Activated T-helper 2 cell treated with anti-CD3 and anti-CD28 coated beads, Interferon-gamma antibody, Interleukin-2, Interleukin-4, amounts not matched to agents 10 μg/mL and 5 μg/mL and 100 μg/mL, durations not matched to agents 14 hours and 24 hours and 36 hours (primary cell): ENCODE measurements at regions of chr15 and their contacts with region 1.

Region 1: GRCh38 chr15:99371180-99372103 is 120.2 kb downstream of the LRRC28 start:
- DNase-seq: no peak
- H3K4me3 Mint-ChIP-seq: peak overlapping the region; percentile 18
- H3K27ac Mint-ChIP-seq: peak overlapping the region; percentile 65
- H3K4me1 Mint-ChIP-seq: peaks cover 21% of the 10 kb centered on the region
- H3K27me3 Mint-ChIP-seq: no peaks in the 10 kb centered on the region

Region 2: GRCh38 chr15:99273801-99274200 is 97.6 kb before region 1 on chr15:
- intact Hi-C with region 1: loop called (anchors 2 kb)
- DNase-seq: no peak
- H3K4me3 Mint-ChIP-seq: no peak overlapping the region
- H3K27ac Mint-ChIP-seq: no peak overlapping the region
- H3K4me1 Mint-ChIP-seq: peaks cover 14% of the 10 kb centered on the region
- H3K27me3 Mint-ChIP-seq: no peaks in the 10 kb centered on the region

Region 3: GRCh38 chr15:99282121-99282520 is 89.3 kb before region 1 on chr15:
- intact Hi-C with region 1: loop called (anchors 2 kb)
- DNase-seq: no peak
- H3K4me3 Mint-ChIP-seq: no peak overlapping the region
- H3K27ac Mint-ChIP-seq: no peak overlapping the region
- H3K4me1 Mint-ChIP-seq: peaks cover 46% of the 10 kb centered on the region
- H3K27me3 Mint-ChIP-seq: no peaks in the 10 kb centered on the region

Region 4: DNA sequence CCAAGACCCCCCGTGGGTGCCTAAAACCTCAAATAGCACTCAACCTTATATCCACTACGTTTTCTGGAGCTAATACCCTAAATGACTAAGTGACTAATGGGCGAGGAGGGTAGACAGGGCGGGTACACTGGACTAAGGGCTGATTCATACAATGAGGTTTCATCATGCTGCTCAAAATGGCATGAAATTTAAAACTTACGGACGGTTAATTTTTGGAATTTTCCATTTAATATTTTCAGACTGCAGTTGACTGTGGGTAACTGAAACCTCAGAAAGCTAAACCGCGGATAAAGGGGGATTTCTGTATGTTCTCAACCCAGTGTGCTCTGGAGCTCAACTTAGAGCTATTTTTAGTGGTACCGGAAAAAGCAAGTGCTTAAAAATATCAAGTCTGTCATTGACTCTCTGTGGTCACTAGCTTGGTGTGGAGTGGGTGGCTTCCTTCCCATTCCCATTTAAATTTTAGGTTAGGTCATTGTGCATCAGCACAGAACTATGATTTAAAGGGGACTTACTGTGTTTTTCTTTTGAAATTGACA is 47.3 kb before region 1 on chr15:
- intact Hi-C with region 1: loop called (anchors 5 kb)
- DNase-seq: no peak
- H3K4me3 Mint-ChIP-seq: no peak overlapping the region
- H3K27ac Mint-ChIP-seq: no peak overlapping the region
- H3K4me1 Mint-ChIP-seq: peaks cover 9% of the 10 kb centered on the region
- H3K27me3 Mint-ChIP-seq: no peaks in the 10 kb centered on the region

Region 5: GRCh38 chr15:99343881-99344551 is 27.4 kb before region 1 on chr15:
- intact Hi-C with region 1: loop called (anchors 2 kb)
- DNase-seq: no peak
- H3K4me3 Mint-ChIP-seq: no peak overlapping the region
- H3K27ac Mint-ChIP-seq: peak overlapping the region; percentile 11
- H3K4me1 Mint-ChIP-seq: peaks cover 12% of the 10 kb centered on the region
- H3K27me3 Mint-ChIP-seq: no peaks in the 10 kb centered on the region

Region 6: DNA sequence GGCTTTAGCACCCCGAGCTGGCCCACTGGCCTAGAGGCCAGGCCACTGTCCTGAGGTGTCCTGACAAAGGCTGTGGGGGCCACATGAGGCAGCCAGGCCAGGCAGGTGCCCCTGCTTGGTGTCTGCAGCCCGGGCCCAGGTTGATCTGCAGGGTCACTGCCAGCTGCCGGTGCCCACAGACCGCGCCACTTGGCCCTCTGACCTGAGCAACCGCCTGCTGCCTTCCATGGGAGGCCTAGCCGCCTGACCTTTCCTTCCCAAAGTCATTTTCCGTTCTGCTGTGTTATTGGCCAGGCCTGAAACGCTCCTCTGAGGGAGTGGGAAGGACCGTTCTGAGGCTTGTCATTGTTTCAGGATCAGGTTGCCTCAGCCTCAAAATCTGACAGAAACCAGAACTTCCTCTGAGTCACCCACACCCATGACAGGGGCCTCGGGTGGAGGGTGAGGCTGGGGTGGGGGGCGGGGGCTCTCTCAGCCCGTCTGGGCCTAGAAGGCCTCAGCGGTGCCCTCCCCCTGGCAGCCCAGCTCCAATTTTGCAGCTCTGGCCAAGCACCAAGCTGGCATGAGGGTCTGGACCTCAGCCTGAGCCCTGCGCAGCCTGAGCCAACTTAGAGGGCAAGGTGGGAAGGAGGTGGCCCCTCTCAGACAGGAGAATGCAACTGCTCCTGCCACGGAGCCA is 53.7 kb after region 1 on chr15:
- intact Hi-C with region 1: loop called (anchors 5 kb)
- DNase-seq: peak; percentile 39
- H3K4me3 Mint-ChIP-seq: peak overlapping the region; percentile 9
- H3K27ac Mint-ChIP-seq: peak overlapping the region; percentile 80
- H3K4me1 Mint-ChIP-seq: peaks cover 38% of the 10 kb centered on the region
- H3K27me3 Mint-ChIP-seq: no peaks in the 10 kb centered on the region

Region 7: GRCh38 chr15:99565299-99566156 is 194.1 kb after region 1 on chr15 and contains the start of gene MEF2A:
- intact Hi-C with region 1: loop called (anchors 10 kb)
- DNase-seq: peak; percentile 92
- H3K4me3 Mint-ChIP-seq: peak within 1 kb of the TSS; percentile 98
- H3K27ac Mint-ChIP-seq: peak within 1 kb of the TSS; percentile 93
- H3K4me1 Mint-ChIP-seq: peaks cover 31% of the 10 kb centered on the region
- H3K27me3 Mint-ChIP-seq: peaks cover 8% of the 10 kb centered on the region
- total RNA-seq, gene MEF2A: 20.9 and 23.4 TPM in 2 replicates